Breast epithelium (tissue), 4 donors: ENCODE measurements at regions of chr20 and their contacts with region 1.

Region 1: GRCh38 chr20:19757487-19758132 is 448 bp upstream of the RIN2 start:
- DNase-seq: peak; percentile 89 to 94
- H3K4me3 ChIP-seq: peak overlapping the region; percentile 66 to 94 (median 81)
- H3K27ac ChIP-seq: peak overlapping the region; percentile 92 to 96
- H3K4me1 ChIP-seq: peaks cover 3 to 8% of the 10 kb centered on the region in 2 donors
- H3K27me3 ChIP-seq: no peaks in the 10 kb centered on the region
- CTCF ChIP-seq: no peak
- POLR2A ChIP-seq: peak; percentile 30

Region 2: GRCh38 chr20:18567743-18568091 is 1189.9 kb before region 1 on chr20:
- intact Hi-C with region 1: no loop called
- DNase-seq: no peak
- H3K4me3 ChIP-seq: peak overlapping the region; percentile 71 to 73 (median 73)
- H3K27ac ChIP-seq: peak overlapping the region; percentile 92 to 93
- H3K4me1 ChIP-seq: no peaks in the 10 kb centered on the region
- H3K27me3 ChIP-seq: no peaks in the 10 kb centered on the region
- CTCF ChIP-seq: no peak
- POLR2A ChIP-seq: no peak

Region 3: GRCh38 chr20:19735446-19735845 is 22.2 kb before region 1 on chr20:
- intact Hi-C with region 1: no loop called
- DNase-seq: peak; percentile 52 to 67
- H3K4me3 ChIP-seq: no peak overlapping the region
- H3K27ac ChIP-seq: peak overlapping the region in 1 of 2 donors; percentile 40
- H3K4me1 ChIP-seq: no peaks in the 10 kb centered on the region
- H3K27me3 ChIP-seq: no peaks in the 10 kb centered on the region
- CTCF ChIP-seq: no peak
- POLR2A ChIP-seq: no peak

Region 4: DNA sequence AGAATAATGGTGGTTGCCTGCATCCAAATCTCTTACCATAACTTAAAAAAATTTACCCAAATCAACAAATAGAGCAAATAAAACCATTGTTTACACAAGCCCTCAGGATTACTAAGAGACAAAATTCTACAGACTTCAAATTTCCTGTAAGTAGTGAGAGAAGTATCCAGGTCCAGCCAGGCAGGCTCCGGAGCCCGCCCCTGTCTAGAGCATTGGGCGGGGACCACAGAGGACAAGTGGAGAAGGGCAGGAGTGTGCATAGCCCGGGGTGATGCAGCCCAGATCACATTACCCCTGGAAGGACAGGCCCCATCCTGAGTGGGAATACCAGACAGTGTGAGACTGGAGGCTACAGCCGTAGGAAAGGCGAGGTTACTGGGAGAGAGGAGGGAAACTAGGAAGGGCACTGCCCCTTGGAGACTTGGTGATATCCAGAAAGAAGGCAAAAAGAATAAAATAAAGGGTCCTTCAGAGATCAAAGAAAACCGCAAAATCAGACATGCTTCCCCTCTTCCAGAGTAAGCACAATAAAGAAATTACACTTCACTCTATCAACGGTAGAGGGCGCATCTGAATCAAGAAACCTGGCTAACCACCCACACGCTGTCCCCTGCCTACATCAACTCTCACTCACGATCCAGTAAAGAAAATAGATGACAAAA is 27.0 kb after region 1 on chr20:
- intact Hi-C with region 1: loop called (anchors 1 kb)
- DNase-seq: peak; percentile 40 to 59
- H3K4me3 ChIP-seq: no peak overlapping the region
- H3K27ac ChIP-seq: peak overlapping the region; percentile 59 to 66
- H3K4me1 ChIP-seq: peaks cover 9 to 28% of the 10 kb centered on the region in 2 donors
- H3K27me3 ChIP-seq: no peaks in the 10 kb centered on the region
- CTCF ChIP-seq: peak; percentile 79 to 88 (median 81)
- POLR2A ChIP-seq: no peak